ENCODE measurements at regions of chr18 and their contacts with region 1.

Region 1: DNA sequence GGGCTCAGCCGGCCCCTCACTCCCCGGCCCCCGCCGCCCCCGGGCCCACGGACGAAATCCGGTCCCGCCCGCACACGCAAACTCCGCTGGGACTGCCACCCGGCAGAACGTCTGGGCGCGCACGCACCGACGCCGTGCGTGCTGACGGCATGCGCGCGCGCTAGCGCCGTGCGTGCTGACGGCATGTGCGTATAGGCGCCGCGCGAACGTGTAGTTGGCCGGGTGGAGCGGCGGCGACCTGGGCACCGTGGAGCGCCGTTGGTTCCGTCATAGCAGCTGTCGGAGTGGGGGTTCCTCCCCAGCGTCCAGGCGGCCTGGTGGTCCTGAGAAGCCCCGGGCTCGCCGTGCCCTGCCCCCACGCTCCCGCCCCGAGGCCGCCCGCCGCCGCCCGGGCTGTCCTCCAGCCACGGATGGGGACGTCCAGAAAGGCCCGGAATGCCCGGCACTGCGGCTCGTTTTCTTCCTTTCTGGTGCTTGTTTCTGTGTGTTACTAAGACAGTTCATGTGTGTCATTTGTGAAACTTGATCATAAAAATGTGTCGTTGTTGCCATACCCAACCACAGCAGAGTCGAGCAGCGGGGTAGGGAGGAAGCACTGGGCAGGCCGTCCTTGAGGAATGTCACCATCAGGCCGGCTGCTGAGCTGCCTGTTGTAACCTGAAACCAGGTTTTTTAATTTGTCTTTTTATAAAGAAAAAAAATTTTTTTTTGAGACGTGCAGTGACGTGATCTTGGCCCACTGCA is at the start of gene TXNL4A:
- DNase-seq: peak; percentile 81
- H3K4me3 ChIP-seq: peak within 1 kb of the TSS; percentile 74 to 99 (median 98)
- H3K27ac ChIP-seq: peak within 1 kb of the TSS; percentile 71
- H3K4me1 ChIP-seq: peaks cover 10% of the 10 kb centered on the region
- H3K27me3 ChIP-seq: no peaks in the 10 kb centered on the region
- CTCF ChIP-seq: no peak
- total RNA-seq, gene TXNL4A: 32.8 to 100 TPM

Region 2: DNA sequence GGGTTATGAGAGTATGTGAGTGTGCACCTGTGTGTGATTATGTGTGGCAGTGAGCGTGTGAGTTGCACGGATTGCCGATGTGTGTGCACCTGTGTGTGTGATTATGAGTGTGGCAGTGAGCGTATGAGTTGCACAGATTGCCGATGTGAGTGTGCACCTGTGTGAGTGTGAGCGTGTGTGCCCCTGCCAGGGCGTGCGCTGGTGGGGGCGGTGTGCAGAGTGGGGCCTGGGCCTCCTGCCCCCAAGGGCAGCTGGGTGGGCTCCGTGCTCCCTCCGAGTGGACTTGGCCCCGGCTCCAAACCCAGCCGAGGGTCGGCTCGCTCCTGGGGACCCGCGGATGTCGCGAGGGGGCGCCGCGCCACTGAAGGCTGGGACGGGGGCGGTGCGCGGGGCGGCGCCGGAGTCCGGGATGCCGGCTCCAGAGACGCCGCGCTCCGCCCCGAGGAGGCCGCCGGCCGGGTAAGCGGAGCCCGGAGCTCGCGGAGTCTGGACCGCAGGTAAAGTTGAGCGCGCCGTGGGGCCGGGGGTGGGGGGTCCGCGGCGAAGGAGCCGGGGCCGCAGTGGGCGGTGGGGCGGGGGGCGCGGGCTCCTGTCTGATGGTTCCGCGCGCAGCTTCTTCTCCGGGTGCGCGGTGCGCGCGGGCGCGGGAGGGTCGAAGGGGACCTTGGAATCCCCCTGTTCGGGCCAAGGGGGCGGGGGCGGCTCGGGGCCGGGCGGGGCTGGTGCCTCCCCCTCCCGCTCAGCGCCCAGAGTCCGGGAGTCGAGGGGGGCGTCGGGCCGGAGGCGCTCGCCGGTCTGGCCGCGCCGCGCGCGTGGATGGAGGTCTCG is 190.9 kb before region 1 on chr18 and contains the start of gene KCNG2:
- CTCF ChIA-PET with region 1: no interaction called
- dilution Hi-C with region 1: no loop called
- in situ Hi-C with region 1: no loop called
- intact Hi-C with region 1: loop called (anchors 2 kb)
- DNase-seq: no peak
- H3K4me3 ChIP-seq: no peak within 1 kb of the TSS
- H3K27ac ChIP-seq: no peak within 1 kb of the TSS
- H3K4me1 ChIP-seq: peaks cover 12% of the 10 kb centered on the region
- H3K27me3 ChIP-seq: peaks cover 20% of the 10 kb centered on the region
- CTCF ChIP-seq: no peak
- total RNA-seq, gene KCNG2: 0.17 TPM in 1 of 2 donors, not detected in the other

Region 3: GRCh38 chr18:79951578-79952455 is 36.8 kb before region 1 on chr18 and contains the start of gene SLC66A2:
- CTCF ChIA-PET with region 1: no interaction called
- dilution Hi-C with region 1: no loop called
- in situ Hi-C with region 1: no loop called
- intact Hi-C with region 1: loop called (anchors 1 kb)
- DNase-seq: peak; percentile 83
- H3K4me3 ChIP-seq: peak within 1 kb of the TSS; percentile 70 to 76 (median 75)
- H3K27ac ChIP-seq: peak within 1 kb of the TSS; percentile 56
- H3K4me1 ChIP-seq: peaks cover 15% of the 10 kb centered on the region
- H3K27me3 ChIP-seq: no peaks in the 10 kb centered on the region
- CTCF ChIP-seq: no peak
- total RNA-seq, gene SLC66A2: 40.0 to 42.7 TPM

Region 4: GRCh38 chr18:80034068-80034851 is 45.6 kb after region 1 on chr18 and contains the start of gene RBFA:
- CTCF ChIA-PET with region 1: no interaction called
- dilution Hi-C with region 1: no loop called
- in situ Hi-C with region 1: no loop called
- intact Hi-C with region 1: loop called (anchors 1 kb)
- DNase-seq: peak; percentile 97
- H3K4me3 ChIP-seq: peak within 1 kb of the TSS; percentile 67 to 97 (median 90)
- H3K27ac ChIP-seq: peak within 1 kb of the TSS; percentile 84
- H3K4me1 ChIP-seq: peaks cover 4% of the 10 kb centered on the region
- H3K27me3 ChIP-seq: no peaks in the 10 kb centered on the region
- CTCF ChIP-seq: peak in 1 of 2 donors; percentile 57
- total RNA-seq, gene RBFA: 29.3 to 35.1 TPM

Region 5: GRCh38 chr18:80068571-80069267 is 80.1 kb after region 1 on chr18:
- CTCF ChIA-PET with region 1: no interaction called
- dilution Hi-C with region 1: no loop called
- in situ Hi-C with region 1: no loop called
- intact Hi-C with region 1: no loop called
- DNase-seq: no peak
- H3K4me3 ChIP-seq: no peak overlapping the region
- H3K27ac ChIP-seq: no peak overlapping the region
- H3K4me1 ChIP-seq: no peaks in the 10 kb centered on the region
- H3K27me3 ChIP-seq: no peaks in the 10 kb centered on the region
- CTCF ChIP-seq: no peak

Region 6: DNA sequence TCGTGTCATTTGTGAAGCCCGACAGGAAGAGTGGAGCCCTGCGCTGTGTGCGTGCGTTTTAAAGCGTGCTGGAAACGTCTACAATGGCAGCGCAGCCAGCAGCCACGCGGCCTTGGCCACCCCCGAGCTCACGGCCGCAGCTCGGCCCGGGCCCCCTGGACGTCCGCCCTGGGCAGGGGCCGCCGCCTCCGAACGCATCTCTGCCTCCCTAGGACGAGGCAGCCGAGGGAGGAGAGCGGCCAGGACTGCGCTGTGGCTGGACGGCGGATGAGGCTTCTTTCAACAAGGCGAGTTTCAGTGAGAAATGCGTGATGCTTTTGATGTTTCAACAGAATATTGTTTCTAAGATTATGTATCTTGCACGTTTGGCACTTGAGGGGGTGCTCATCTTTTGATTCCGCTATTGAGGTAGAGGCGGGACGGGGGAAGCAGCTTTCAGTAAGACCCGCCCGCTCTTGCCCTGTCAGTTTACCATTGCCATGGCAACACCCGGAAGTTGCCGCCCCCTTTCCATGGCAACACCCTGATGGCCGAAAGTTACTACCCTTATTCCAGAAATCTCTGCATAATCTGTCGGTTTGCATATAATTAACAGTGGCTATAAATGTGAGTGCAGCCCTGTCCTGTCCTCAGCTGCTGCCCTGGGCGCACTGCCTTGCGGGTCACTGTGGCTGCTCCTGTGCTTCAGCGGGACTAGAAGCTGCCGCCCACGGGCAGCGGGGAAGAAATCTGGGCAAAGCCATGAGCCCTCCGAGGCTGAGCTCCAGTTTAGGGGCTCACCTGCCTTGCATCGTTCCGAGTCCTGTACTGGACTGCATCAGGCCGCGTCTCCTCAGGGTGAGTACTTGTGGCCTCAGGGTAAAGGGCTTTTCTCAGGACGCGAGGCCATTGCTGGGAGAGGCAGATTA is 159.0 kb after region 1 on chr18:
- CTCF ChIA-PET with region 1: no interaction called
- dilution Hi-C with region 1: no loop called
- in situ Hi-C with region 1: no loop called
- intact Hi-C with region 1: loop called (anchors 5 kb)
- DNase-seq: peak; percentile 86
- H3K4me3 ChIP-seq: peak overlapping the region; percentile 68 to 78 (median 72)
- H3K27ac ChIP-seq: peak overlapping the region; percentile 67
- H3K4me1 ChIP-seq: peaks cover 15% of the 10 kb centered on the region
- H3K27me3 ChIP-seq: no peaks in the 10 kb centered on the region
- CTCF ChIP-seq: no peak

Measured in mammary epithelial cell (primary cell).